ENCODE measurements at regions of chr4 and their contacts with region 1.

Region 1: DNA sequence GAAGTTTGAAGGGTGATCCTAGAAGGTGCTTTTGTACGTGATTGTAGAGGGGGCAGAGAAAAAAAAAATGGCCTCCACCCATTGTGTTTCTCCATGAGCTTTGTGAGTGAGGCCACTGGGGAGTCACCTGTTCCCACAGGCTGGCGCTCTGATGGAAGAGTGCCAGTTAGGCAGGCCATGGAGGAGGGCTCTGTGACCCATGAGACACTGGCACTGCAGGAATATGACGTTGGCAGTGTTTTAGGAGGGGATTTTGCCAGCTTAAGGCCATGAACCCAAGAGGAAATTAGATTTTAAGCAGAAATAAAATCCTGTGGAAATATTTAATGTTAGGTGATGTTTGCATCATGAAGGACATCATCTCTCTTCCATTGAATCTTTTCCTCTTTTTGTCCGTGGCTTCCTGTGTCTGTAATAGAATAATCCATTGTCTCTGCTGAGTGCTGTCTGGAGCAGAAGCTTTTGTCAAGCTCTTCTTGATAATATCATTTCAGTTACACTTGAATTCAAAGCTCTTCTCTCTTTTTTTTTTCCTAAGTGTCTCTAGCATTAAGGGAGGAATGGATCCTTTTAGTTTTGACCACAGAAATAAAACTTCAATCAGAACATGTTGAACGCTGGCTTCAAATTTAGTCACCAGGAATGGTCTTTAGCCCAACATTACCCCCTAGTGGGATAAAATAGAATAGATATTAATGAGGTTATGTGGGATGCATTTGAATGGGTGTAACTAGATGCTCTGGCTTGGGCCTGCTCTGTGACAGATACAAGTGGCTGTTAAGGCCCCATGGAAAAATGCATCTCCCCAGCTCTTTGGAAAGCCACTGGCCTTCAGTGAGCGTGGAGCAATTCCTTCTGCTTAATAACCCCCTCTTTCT is 41.0 kb upstream of the UCP1 start:
- DNase-seq: peak; percentile 75
- H3K4me3 ChIP-seq: no peak overlapping the region
- H3K27ac ChIP-seq: no peak overlapping the region
- H3K4me1 ChIP-seq: peaks cover 32% of the 10 kb centered on the region
- CTCF ChIP-seq: peak; percentile 87

Region 2: DNA sequence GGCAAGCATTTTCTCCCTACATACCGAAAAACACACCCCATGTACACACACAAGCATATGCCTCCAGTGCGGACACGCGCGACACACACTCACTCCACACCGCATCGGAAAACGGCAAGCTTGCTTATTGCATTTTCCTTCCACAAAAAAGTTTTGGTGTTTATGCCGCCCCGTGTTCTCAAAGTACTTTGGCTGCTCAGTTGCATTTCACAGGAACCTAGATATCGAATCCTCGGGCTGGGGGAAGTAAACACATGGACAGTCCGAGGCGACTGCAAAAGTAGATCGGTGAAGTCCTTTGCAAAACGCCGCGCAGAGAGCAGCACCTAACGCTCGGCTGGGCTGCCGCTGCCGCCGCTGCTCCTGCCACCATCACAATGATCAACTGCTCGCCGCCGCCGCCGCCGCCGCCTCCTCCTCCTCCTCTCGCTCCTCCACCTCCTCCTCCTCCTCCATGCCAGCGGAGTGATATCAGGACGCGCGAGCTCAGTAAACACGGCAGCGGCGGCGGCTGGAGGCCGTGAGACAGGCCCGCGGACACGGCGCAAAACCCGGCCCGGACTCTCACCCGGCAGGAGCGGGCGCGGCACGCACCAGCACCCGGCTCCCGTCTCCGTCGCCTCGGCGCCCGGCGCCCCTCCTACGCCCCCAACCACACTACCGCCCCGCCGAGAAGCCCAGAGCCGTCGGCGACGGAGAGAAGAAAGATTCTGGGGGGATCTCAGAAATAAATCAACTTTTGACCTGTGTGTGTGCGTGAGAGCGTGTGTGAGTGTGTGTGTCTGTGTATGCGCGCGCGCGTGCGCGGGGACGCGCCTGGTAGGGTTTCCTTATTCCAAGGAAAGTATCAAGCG is 455.8 kb before region 1 on chr4 and contains the start of gene MAML3:
- CTCF ChIA-PET with region 1: no interaction called
- POLR2A ChIA-PET with region 1: interaction called, 4 read pairs
- intact Hi-C with region 1: loop called (anchors 10 kb)
- DNase-seq: peak; percentile 91
- H3K4me3 ChIP-seq: peak within 1 kb of the TSS; percentile 72
- H3K27ac ChIP-seq: peak within 1 kb of the TSS; percentile 52
- H3K4me1 ChIP-seq: peaks cover 59% of the 10 kb centered on the region
- CTCF ChIP-seq: no peak
- total RNA-seq, gene MAML3: 1.2 and 1.8 TPM in 2 replicates

Region 3: GRCh38 chr4:140595065-140595464 is 14.7 kb before region 1 on chr4:
- CTCF ChIA-PET with region 1: interaction called, 4 read pairs
- POLR2A ChIA-PET with region 1: interaction called, 18 read pairs
- intact Hi-C with region 1: no loop called
- DNase-seq: peak; percentile 73
- H3K4me3 ChIP-seq: no peak overlapping the region
- H3K27ac ChIP-seq: no peak overlapping the region
- H3K4me1 ChIP-seq: peaks cover 2% of the 10 kb centered on the region
- CTCF ChIP-seq: peak; percentile 87

Region 4: GRCh38 chr4:140626661-140627376 is 17.0 kb after region 1 on chr4:
- CTCF ChIA-PET with region 1: interaction called, 9 read pairs
- POLR2A ChIA-PET with region 1: interaction called, 37 read pairs
- intact Hi-C with region 1: no loop called
- DNase-seq: no peak
- H3K4me3 ChIP-seq: no peak overlapping the region
- H3K27ac ChIP-seq: no peak overlapping the region
- H3K4me1 ChIP-seq: peaks cover 41% of the 10 kb centered on the region
- CTCF ChIP-seq: peak; percentile 39; the same call in 1 of the 2 replicates

Region 5: GRCh38 chr4:140735779-140736391 is 126.1 kb after region 1 on chr4:
- CTCF ChIA-PET with region 1: no interaction called
- POLR2A ChIA-PET with region 1: no interaction called
- intact Hi-C with region 1: no loop called
- DNase-seq: no peak
- H3K4me3 ChIP-seq: no peak overlapping the region
- H3K27ac ChIP-seq: no peak overlapping the region
- H3K4me1 ChIP-seq: peaks cover 5% of the 10 kb centered on the region
- CTCF ChIP-seq: no peak

Region 6: GRCh38 chr4:140935254-140935653 is 325.5 kb after region 1 on chr4:
- CTCF ChIA-PET with region 1: no interaction called
- POLR2A ChIA-PET with region 1: no interaction called
- intact Hi-C with region 1: no loop called
- DNase-seq: no peak
- H3K4me3 ChIP-seq: no peak overlapping the region
- H3K27ac ChIP-seq: no peak overlapping the region
- H3K4me1 ChIP-seq: no peaks in the 10 kb centered on the region
- CTCF ChIP-seq: no peak